Adrenal gland (tissue), 19 donors: ENCODE measurements at regions of chr4 and their contacts with region 1.

Region 1: GRCh38 chr4:56828784-56829535 is 7.5 kb upstream of the SPINK2 start:
- DNase-seq: no peak
- H3K4me3 ChIP-seq: no peak overlapping the region
- H3K27ac ChIP-seq: no peak overlapping the region
- H3K4me1 ChIP-seq: no peaks in the 10 kb centered on the region
- H3K27me3 ChIP-seq: no peaks in the 10 kb centered on the region
- CTCF ChIP-seq: no peak
- POLR2A ChIP-seq: no peak

Region 2: GRCh38 chr4:56435306-56435926 is 393.5 kb before region 1 on chr4 and contains the start of gene PPAT:
- intact Hi-C with region 1: loop called in 1 of 2 experiments (anchors 10 kb)
- DNase-seq: peak; percentile 98 to 99 (median 98)
- H3K4me3 ChIP-seq: peak within 1 kb of the TSS; percentile 46 to 84 (median 68)
- H3K27ac ChIP-seq: peak within 1 kb of the TSS; percentile 91 to 98 (median 92)
- H3K4me1 ChIP-seq: peaks cover 11 to 14% of the 10 kb centered on the region in 2 donors
- H3K27me3 ChIP-seq: no peaks in the 10 kb centered on the region
- CTCF ChIP-seq: peak; percentile 24 to 57 (median 41)
- POLR2A ChIP-seq: peak in 1 of 2 donors; percentile 83
- total RNA-seq, gene PPAT: 6.0 to 19.9 (median 14.3) TPM

Region 3: DNA sequence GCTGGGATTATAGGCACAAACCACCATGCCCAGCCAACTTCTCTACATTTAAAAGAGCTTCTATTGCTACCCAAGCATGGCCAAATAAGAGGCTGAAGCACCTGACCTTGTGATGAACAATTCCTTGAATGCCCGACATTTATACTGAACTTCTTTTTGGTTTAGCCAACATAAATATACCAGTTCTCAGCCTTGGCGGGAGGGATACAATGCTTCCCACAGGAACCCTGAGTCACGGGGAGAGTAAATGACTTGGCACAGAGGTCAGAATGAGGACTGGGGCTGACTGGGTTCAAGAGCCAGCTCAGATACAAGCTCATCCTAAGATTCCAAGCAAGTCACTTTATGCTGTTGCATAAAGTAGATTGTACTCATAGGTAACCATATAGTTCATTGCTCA is 154.0 kb before region 1 on chr4:
- intact Hi-C with region 1: no loop called
- DNase-seq: peak in 1 of 7 donors; percentile 30
- H3K4me3 ChIP-seq: no peak overlapping the region
- H3K27ac ChIP-seq: no peak overlapping the region
- H3K4me1 ChIP-seq: no peaks in the 10 kb centered on the region
- H3K27me3 ChIP-seq: no peaks in the 10 kb centered on the region
- CTCF ChIP-seq: no peak
- POLR2A ChIP-seq: no peak

Region 4: GRCh38 chr4:56879811-56880395 is 50.9 kb after region 1 on chr4:
- intact Hi-C with region 1: no loop called
- DNase-seq: no peak
- H3K4me3 ChIP-seq: no peak overlapping the region
- H3K27ac ChIP-seq: no peak overlapping the region
- H3K4me1 ChIP-seq: no peaks in the 10 kb centered on the region
- H3K27me3 ChIP-seq: no peaks in the 10 kb centered on the region
- CTCF ChIP-seq: no peak
- POLR2A ChIP-seq: no peak